ENCODE measurements at regions of chr16 and their contacts with region 1.

Region 1: DNA sequence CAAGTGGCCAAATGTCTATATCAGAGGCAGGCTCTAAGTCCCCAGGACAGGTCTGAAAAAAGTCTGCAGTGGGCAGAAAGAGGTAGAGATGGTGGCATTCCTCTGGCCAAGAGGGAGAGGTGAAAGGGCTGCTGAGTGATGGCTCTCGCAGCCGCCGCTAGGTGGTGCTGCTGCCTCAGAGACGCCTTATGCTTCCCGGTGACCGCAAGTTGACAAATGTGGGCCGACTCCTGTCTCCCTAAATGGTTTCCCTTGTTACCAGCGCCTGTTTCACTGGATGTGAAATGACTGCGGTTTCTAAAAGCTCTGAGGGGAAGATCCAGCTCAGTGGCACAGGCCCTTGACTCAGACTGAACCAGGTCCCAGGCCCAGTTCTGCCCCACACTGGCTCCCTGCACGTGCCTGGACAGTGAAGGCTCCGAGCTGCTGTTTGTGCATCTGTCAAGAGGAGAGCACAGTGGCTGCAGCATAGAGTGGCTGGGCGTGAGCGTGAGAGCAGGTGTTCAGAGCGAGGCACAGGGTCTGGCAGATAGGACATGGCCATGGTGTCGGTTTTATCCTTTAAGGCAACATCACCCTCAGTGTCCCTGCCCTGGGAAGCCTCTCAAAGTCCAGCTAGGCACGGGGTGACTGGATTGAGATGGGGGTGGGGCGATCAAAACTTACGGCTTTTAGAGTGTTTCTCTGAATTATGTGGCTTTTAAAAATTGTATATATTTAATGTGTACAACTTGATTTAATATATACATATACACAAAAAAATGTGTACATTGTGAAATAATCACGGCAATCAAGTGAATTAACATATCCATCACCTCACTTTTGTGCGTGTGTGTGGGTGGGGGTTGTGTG is 19.9 kb downstream of the CLEC16A start:
- DNase-seq: peak; percentile 72
- H3K27ac ChIP-seq: peak overlapping the region; percentile 24; the same call in 1 of the 2 replicates
- CTCF ChIP-seq: peak; percentile 95

Region 2: GRCh38 chr16:10949370-10949970 is 14.8 kb before region 1 on chr16:
- CTCF ChIA-PET with region 1: interaction called, 11 read pairs
- POLR2A ChIA-PET with region 1: no interaction called
- DNase-seq: no peak
- H3K27ac ChIP-seq: peak overlapping the region; percentile 5; the same call in 1 of the 2 replicates
- CTCF ChIP-seq: no peak

Region 3: GRCh38 chr16:11025120-11025531 is 60.9 kb after region 1 on chr16:
- CTCF ChIA-PET with region 1: no interaction called
- POLR2A ChIA-PET with region 1: no interaction called
- DNase-seq: no peak
- H3K27ac ChIP-seq: no peak overlapping the region
- CTCF ChIP-seq: no peak

Measured in RWPE1 (cell line).